Lower leg skin (tissue), 4 donors: ENCODE measurements at regions of chr9 and their contacts with region 1.

Region 1: GRCh38 chr9:118482306-118482705 is 778.1 kb downstream of the TLR4 start:
- DNase-seq: no peak
- H3K4me3 ChIP-seq: no peak overlapping the region
- CTCF ChIP-seq: no peak
- POLR2A ChIP-seq: no peak

Region 2: DNA sequence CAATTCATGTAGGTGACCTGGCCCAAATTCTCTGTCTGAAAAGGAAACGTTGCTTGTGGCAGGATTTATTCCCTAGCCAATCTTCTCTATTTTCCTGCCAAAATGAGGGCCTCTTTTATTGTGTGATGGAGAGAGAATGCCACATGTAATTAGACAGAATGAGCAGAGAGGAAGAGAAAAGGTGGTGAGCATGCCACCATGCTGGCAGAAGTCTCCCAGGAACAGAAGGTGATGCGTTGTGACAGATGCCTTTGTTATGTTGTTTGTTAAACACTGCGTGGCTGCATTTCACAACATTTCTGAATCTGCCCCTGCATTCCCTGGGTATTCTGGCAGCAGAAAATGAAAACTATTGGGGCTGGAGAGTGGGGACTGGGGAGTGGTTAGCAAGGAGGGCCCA is 200.5 kb before region 1 on chr9:
- intact Hi-C with region 1: loop called (anchors 5 kb)
- DNase-seq: no peak
- H3K4me3 ChIP-seq: no peak overlapping the region
- CTCF ChIP-seq: no peak
- POLR2A ChIP-seq: no peak

Region 3: GRCh38 chr9:118577121-118577520 is 94.8 kb after region 1 on chr9:
- intact Hi-C with region 1: no loop called
- DNase-seq: no peak
- H3K4me3 ChIP-seq: no peak overlapping the region
- CTCF ChIP-seq: no peak
- POLR2A ChIP-seq: no peak